Right cardiac atrium (tissue), 5 donors: ENCODE measurements at regions of chr17 and their contacts with region 1.

Region 1: DNA sequence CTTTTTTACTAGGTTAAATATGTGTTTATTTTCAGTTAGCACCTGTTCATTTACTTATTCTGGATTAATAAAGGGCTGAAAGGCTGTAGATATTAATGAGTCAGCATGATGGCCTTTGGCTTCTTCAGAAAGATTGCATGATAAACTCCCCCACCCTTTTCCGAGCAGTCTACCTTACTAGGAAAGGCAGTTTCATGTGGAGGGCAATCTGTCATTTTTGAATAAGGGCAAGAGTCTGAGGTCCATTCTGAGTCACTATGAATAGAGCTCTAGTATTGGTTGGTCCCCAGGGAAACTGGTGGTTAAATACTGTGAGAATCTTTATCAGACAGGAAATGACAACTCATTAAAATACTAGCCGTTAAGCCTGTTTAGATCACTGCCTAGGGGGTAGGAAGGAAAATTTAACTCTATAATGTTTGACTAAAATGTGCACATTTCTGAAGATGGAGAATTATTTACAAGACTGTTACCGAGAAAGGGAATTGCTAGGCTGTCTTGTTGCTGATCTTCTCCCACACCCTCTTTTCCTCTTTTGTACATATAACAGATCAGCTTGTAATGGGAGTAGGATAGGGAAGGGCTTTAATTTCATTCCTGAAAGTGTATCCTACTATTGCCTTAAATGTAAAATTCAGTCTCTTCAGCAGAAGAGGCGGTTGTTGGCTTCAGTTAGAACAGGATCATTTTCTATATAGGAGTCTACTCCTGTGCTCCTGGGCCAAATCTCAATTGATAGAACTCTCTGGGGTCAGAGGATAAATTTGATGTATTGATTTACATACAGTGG is 63.3 kb downstream of the TUBD1 start:
- DNase-seq: no peak
- ATAC-seq: peak; percentile 85 to 96
- H3K4me3 ChIP-seq: no peak overlapping the region
- H3K27ac ChIP-seq: no peak overlapping the region
- H3K4me1 ChIP-seq: peaks cover 9% of the 10 kb centered on the region
- H3K27me3 ChIP-seq: no peaks in the 10 kb centered on the region

Region 2: DNA sequence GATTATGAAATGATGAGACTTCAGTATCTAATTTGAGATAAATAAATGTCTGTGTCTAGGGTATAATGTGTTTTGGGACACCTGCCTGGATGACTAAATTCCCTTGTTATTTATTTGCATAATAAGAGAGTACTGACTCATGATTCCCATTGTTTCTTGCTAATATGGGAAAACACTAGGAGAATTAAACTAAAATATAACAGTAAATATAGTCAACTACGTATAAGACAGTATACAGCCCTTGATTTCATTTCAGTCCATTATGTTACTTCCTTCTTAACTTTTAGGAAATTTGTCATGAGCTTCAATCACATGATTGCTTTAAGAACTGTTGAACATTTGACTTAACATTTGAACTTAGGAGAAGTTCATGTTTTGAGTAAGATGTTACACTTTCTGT is 59.5 kb before region 1 on chr17:
- intact Hi-C with region 1: loop called in 1 of 4 experiments (anchors 10 kb)
- DNase-seq: no peak
- ATAC-seq: no peak
- H3K4me3 ChIP-seq: no peak overlapping the region
- H3K27ac ChIP-seq: no peak overlapping the region
- H3K4me1 ChIP-seq: no peaks in the 10 kb centered on the region
- H3K27me3 ChIP-seq: no peaks in the 10 kb centered on the region

Region 3: DNA sequence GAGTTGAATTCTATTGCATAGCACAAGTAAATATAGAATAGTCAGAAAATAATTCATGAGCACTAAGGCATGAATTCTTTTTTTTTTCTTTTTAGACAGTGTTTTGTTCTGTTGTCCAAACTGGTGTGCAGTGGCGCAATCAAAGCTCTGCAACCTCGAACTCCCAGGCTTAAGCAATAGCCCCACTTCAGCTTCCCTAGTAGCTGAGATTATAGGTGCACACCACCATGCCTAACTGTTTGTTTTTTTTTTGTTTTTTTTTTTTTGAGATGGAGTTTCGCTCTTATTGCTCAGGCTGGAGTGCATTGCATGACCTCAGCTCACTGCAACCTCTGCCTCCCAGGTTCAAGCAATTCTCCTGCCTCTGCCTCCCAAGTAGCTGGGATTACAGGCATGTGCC is 46.7 kb after region 1 on chr17:
- intact Hi-C with region 1: no loop called
- DNase-seq: no peak
- ATAC-seq: no peak
- H3K4me3 ChIP-seq: no peak overlapping the region
- H3K27ac ChIP-seq: no peak overlapping the region
- H3K4me1 ChIP-seq: no peaks in the 10 kb centered on the region
- H3K27me3 ChIP-seq: no peaks in the 10 kb centered on the region

Region 4: GRCh38 chr17:59903455-59903854 is 74.0 kb after region 1 on chr17:
- intact Hi-C with region 1: no loop called
- DNase-seq: no peak
- ATAC-seq: no peak
- H3K4me3 ChIP-seq: no peak overlapping the region
- H3K27ac ChIP-seq: no peak overlapping the region
- H3K4me1 ChIP-seq: no peaks in the 10 kb centered on the region
- H3K27me3 ChIP-seq: no peaks in the 10 kb centered on the region

Region 5: DNA sequence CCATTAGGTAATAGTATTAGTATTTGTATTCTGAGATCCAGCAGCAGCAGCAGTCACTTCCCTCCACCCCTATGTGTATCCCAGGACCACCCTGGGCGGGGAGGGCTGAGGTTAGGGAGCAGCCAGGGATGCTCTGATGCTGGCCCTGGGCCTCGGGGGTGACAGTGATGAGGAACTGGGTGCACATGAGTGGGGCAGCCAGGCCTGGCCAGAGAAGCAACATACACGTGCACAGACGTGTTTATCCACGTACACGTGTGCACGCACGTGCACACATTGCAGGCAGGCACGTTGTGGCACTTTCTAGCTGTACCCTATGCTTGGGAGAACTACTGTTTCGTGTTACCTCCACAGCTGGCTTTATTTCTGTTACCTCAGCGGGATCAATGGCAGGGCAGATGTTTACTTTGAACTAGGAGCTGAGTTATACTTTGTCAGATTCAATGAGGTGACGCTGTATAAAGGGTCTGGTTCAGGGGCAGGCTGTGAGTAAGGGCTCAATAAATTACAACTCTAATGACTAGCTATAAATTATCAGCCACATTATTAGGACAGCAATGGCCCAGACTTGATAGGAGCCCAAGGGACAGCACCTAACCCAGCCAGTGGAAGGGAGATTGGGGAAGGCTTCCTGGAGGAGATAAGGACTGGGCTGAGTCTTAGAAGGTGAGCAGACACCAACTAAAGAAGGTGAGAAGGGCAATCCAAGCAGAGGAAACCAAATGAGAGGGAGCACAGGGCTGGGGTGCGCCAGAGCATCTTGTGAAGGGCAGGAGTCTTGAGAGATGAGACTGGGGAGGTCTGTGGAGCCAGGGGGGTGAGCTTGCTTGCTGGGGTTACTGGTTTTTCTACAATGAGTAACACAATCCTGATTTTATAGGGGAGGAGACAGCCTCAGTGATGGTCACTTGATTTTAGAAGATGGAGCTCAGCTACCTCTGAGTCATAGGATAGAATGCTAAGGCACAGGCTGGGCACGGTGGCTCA is 297.9 kb after region 1 on chr17:
- intact Hi-C with region 1: no loop called
- DNase-seq: no peak
- ATAC-seq: no peak
- H3K4me3 ChIP-seq: no peak overlapping the region
- H3K27ac ChIP-seq: no peak overlapping the region
- H3K4me1 ChIP-seq: no peaks in the 10 kb centered on the region
- H3K27me3 ChIP-seq: no peaks in the 10 kb centered on the region

Region 6: DNA sequence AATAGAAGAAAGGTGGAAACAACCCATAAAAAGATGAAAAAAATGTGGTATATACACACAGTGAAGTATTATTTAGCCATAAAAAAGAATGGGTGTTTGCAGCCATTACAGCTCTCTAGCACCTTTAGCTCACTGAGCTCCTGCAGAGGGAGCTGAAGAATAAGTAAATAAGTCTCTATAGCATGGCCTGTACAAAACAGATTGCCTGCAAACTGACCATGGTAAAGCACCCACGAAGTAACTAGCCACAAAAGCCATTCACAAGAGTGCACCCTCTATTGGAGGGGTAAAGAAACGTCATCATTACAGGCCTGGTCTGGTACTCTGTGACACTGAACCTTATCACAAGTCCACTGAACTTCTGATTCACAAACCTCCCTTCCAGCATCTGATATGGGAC is 486.2 kb after region 1 on chr17:
- intact Hi-C with region 1: no loop called
- DNase-seq: no peak
- ATAC-seq: no peak
- H3K4me3 ChIP-seq: no peak overlapping the region
- H3K27ac ChIP-seq: no peak overlapping the region
- H3K4me1 ChIP-seq: peaks cover 4% of the 10 kb centered on the region
- H3K27me3 ChIP-seq: no peaks in the 10 kb centered on the region